ENCODE measurements at regions of chr5 and their contacts with region 1.

Region 1: DNA sequence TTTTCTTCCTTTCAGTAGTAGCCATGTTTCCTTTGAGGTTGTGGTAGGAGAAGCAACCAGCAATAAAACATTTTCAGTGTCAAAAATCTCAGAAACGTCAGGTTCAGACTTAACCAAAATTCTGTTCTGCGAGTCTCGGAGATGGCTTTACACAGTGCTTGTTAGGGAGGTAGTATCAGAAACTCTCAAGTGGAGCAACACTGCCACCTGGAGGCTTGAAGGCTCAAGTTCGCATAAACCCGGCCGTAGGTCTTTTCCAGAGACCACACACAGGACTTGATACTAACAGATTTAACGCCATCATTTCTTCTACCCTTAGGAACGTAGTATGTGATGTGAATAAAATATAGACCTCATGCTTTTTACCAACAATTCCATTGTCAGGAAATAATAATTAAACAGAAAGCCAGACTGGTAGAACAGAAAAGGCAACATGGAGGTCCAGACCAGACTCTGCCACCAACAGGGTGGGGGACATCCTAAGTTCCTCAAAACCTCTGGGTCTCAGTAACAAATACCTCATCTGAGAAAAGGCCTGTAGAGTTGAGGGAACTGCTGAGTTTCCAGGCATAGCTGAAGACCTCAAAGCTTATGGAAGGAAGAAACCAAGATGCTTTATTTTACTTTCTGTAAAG is 8.5 kb downstream of the PTGER4 start:
- DNase-seq: peak; percentile 90
- H3K4me3 Mint-ChIP-seq: peak overlapping the region; percentile 78
- H3K27ac Mint-ChIP-seq: peak overlapping the region; percentile 85
- H3K4me1 Mint-ChIP-seq: peaks cover 75% of the 10 kb centered on the region
- H3K27me3 Mint-ChIP-seq: no peaks in the 10 kb centered on the region

Region 2: GRCh38 chr5:39948867-39949468 is 739.3 kb before region 1 on chr5:
- CTCF ChIA-PET with region 1: interaction called, 23 read pairs
- POLR2A ChIA-PET with region 1: no interaction called
- DNase-seq: peak; percentile 62
- H3K4me3 Mint-ChIP-seq: no peak overlapping the region
- H3K27ac Mint-ChIP-seq: no peak overlapping the region
- H3K4me1 Mint-ChIP-seq: peaks cover 2% of the 10 kb centered on the region
- H3K27me3 Mint-ChIP-seq: no peaks in the 10 kb centered on the region

Region 3: DNA sequence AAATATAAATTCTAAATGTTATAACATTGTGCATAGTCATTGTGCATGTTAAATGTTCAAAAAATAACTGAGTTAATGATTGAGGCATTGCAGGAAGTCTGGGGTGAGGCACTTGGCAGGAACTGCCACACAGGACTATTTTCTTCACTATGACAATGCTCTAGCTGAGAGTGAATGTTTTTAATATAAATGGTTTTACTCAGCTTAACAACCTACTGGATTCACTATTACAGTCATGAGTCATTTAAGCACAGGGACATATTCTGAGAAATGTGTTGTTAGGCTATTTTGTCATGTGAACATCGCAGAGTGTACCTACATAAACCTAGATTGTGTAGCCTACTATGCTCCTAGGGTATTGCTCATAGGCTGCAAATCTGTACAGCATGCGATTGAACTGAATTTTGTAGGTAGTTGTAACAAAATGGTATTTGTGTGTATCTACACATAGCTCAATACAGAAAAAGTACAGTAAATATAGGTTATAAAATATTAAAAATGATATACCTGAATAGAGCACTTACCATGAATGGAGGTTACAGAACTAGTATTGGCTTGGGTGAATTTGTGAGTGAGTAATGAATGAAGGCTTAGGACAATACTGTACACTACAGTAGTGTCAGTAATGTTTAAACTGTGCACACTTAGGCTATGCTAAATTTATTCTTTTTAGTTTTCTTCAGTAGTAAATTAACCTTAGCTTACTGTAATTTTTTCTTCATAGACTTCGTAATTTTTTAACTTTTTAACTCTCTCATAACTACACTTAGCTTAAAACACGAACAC is 354.6 kb before region 1 on chr5:
- CTCF ChIA-PET with region 1: no interaction called
- POLR2A ChIA-PET with region 1: interaction called, 11 read pairs
- DNase-seq: peak; percentile 28
- H3K4me3 Mint-ChIP-seq: no peak overlapping the region
- H3K27ac Mint-ChIP-seq: peak overlapping the region; percentile 44
- H3K4me1 Mint-ChIP-seq: peaks cover 53% of the 10 kb centered on the region
- H3K27me3 Mint-ChIP-seq: no peaks in the 10 kb centered on the region